ENCODE measurements at regions of chr9 and their contacts with region 1.

Region 1: DNA sequence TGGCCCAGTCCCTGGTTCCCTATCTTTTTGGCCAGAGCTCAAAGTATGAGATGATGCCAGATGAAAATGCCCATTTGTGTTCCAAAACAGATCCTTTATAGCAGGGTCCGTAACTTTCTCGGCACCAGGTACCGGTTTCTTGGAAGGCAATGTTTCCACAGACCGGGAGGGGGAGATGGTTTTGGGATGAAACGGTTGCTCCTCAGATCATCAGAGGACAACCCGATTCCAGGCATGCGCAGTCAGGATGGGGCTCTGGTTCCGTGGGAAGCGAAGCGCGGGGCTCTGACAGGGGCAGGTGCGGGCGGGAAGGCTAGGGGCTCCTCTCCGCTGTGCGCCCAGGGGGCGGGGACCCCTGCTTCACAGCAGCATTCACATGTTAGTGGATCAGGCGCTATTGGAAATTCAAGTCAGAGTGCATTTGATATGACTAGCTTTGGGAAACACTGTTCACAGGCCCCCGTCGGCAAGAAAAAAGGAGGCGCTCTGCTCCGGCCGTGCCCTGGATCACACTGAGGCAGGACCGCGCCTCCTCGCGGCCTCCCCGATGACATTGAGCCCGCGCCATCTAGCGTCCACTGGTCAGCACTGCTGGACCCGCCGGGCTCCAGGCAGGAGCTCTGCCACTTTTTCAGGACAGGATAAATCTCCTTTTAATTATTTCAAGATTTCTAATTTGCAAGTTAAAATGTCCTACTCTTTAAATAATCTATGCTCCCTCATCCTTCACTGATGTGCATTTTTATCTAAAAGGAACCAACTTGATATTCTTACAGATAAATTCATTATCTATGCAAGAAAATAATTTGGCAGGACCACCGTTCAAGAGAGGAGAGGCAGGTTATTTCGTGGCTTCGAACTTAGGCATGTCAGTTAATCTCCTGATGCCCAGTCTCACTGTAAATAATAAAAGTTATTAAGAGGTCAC is 190.0 kb downstream of the FANCC start:
- DNase-seq: peak; percentile 76
- ATAC-seq: peak; percentile 92
- H3K4me3 Mint-ChIP-seq: no peak overlapping the region
- H3K27ac Mint-ChIP-seq: no peak overlapping the region
- H3K4me1 Mint-ChIP-seq: no peaks in the 10 kb centered on the region
- H3K27me3 Mint-ChIP-seq: no peaks in the 10 kb centered on the region

Region 2: GRCh38 chr9:94668418-94668932 is 459.0 kb before region 1 on chr9:
- CTCF ChIA-PET with region 1: interaction called, 39 read pairs
- DNase-seq: no peak
- ATAC-seq: peak; percentile 10
- H3K4me3 Mint-ChIP-seq: no peak overlapping the region
- H3K27ac Mint-ChIP-seq: no peak overlapping the region
- H3K4me1 Mint-ChIP-seq: peaks cover 12% of the 10 kb centered on the region
- H3K27me3 Mint-ChIP-seq: peaks cover 44% of the 10 kb centered on the region

Region 3: DNA sequence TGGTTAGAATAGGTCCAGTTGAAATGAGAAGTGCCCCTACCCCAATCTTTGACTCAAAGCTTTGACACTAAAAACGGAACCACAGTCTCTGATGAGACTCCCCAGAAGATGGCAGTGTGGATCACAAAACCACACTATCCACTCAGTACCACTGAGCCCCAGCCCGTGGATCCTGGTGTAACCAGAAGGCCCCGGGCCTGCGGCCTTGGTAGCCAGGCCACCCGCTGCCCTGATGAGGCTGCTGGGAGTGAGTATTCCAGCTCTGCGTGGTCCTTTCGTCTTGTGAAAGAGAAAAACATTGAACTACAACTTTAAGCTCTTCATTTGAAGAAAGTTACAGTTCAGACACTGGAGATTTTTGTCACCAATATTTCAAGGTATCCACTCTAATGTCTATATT is 446.0 kb before region 1 on chr9:
- CTCF ChIA-PET with region 1: interaction called, 110 read pairs
- DNase-seq: peak; percentile 66
- ATAC-seq: peak; percentile 68
- H3K4me3 Mint-ChIP-seq: no peak overlapping the region
- H3K27ac Mint-ChIP-seq: no peak overlapping the region
- H3K4me1 Mint-ChIP-seq: no peaks in the 10 kb centered on the region
- H3K27me3 Mint-ChIP-seq: peaks cover 57% of the 10 kb centered on the region

Region 4: GRCh38 chr9:94783102-94783664 is 344.3 kb before region 1 on chr9:
- CTCF ChIA-PET with region 1: interaction called, 79 read pairs
- DNase-seq: peak; percentile 51
- ATAC-seq: no peak
- H3K4me3 Mint-ChIP-seq: no peak overlapping the region
- H3K27ac Mint-ChIP-seq: no peak overlapping the region
- H3K4me1 Mint-ChIP-seq: peaks cover 8% of the 10 kb centered on the region
- H3K27me3 Mint-ChIP-seq: no peaks in the 10 kb centered on the region

Region 5: DNA sequence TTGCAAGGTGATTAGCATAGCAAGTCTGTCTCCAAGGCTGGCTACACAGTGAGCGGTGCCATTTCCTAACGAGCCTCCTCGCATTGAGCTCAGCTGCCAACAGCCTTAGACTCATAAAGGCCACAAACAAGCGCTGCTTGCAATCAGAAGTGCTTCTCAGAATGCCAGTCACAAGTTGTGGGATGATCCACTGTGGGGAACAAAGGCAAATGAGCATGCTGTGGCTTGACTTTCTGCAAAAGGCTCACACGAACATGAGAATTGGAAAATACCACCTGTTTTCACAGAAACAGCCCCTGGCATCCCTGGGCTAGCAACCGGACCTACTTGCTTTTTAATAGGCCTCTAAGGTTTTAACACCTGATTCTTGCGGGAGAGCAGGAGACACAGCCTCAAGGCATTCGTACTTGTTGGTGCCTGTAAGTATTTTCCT is 25.5 kb before region 1 on chr9:
- CTCF ChIA-PET with region 1: no interaction called
- DNase-seq: no peak
- ATAC-seq: no peak
- H3K4me3 Mint-ChIP-seq: no peak overlapping the region
- H3K27ac Mint-ChIP-seq: no peak overlapping the region
- H3K4me1 Mint-ChIP-seq: no peaks in the 10 kb centered on the region
- H3K27me3 Mint-ChIP-seq: no peaks in the 10 kb centered on the region

Region 6: DNA sequence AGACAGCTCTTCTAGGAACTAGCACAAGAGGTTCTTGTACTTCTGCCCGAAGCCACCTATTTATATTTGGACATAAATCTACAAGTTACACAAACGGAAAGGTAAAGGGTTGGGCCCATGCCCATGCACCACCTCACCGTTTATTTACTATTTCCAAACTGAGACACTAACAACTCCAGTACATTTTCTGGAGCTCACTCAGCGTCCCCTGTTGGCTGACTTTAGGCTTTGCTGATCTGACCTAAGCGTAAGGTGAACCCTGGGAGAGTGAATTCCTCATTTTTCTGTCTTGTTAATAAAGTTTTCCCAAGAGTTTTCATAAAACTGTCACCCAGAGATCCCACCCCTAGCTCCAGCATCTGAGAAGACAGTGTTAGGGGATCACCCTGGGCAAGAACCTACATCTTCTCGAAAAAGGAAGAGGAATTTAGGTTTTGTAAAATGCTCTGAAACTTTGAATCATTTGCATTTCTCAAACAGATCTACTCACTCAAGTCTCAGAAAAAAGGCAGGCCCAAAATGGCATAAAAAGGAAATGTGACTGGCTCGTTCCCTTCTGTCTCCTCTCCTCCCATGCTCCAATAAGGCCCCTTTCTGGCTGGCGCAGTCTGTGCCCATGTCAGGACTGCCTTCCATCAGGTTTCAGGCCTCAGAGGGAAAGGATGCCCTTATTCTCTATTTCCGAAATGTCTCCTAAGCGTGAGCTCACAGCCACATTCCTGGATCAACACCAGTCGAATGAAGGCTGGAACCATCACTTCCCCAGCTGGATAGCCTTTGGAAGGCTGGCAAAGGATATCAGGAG is 11.3 kb before region 1 on chr9:
- CTCF ChIA-PET with region 1: interaction called, 21 read pairs
- DNase-seq: no peak
- ATAC-seq: no peak
- H3K4me3 Mint-ChIP-seq: no peak overlapping the region
- H3K27ac Mint-ChIP-seq: no peak overlapping the region
- H3K4me1 Mint-ChIP-seq: no peaks in the 10 kb centered on the region
- H3K27me3 Mint-ChIP-seq: no peaks in the 10 kb centered on the region

Region 7: DNA sequence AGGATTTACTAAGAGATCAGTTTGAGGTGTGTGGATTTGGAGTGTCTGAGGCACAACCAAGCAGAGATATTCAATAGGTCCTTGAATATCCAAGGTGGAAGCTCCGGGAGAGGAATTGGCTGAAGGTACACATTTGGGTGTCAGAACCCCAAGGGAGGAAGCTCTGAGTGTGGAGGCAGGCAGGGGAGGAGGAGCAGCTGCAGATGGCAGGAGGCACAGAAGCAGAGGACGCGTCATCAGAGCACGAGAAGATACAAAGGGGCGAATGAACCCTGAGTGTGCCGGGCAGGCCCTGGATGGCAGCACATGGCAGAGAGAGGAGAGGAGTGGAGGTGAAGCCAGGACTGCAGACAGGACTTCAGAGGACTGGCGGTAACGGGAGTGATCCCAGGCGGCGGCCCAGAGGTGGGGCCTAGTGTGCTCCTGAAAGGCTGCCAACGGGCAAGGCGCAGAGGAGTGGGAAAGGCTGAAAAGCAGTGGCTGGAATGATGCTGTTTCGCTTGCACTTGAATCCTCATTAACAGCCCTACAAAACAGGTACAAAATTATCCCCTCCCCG is 10.2 kb after region 1 on chr9:
- CTCF ChIA-PET with region 1: interaction called, 11 read pairs
- DNase-seq: no peak
- ATAC-seq: no peak
- H3K4me3 Mint-ChIP-seq: no peak overlapping the region
- H3K27ac Mint-ChIP-seq: no peak overlapping the region
- H3K4me1 Mint-ChIP-seq: peaks cover 4% of the 10 kb centered on the region
- H3K27me3 Mint-ChIP-seq: no peaks in the 10 kb centered on the region

Region 8: DNA sequence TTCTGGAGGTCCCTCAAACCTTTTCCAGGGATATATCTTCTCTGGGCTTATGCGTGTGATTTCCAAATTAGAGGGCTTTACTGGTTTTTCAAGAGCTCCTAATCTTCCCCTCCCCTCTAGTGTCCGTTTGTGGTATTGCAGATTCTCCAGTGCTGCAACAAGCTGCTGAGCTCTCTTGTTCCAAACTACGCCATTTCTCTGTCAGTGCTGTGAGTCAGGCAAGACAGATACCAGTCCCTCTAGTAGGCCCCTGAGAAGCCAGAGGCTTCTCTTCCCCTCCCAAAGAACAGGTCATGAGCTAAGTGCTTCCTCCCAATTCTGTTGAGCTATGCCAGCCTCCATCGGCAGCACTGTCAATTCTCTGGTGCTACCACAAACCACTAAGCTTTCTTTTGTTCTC is 40.5 kb after region 1 on chr9:
- CTCF ChIA-PET with region 1: interaction called, 14 read pairs
- DNase-seq: peak; percentile 79
- ATAC-seq: peak; percentile 85
- H3K4me3 Mint-ChIP-seq: no peak overlapping the region
- H3K27ac Mint-ChIP-seq: peak overlapping the region; percentile 54
- H3K4me1 Mint-ChIP-seq: peaks cover 33% of the 10 kb centered on the region
- H3K27me3 Mint-ChIP-seq: no peaks in the 10 kb centered on the region